Naive thymus-derived CD4-positive, alpha-beta T cell (primary cell): ENCODE measurements at regions of chr6 and their contacts with region 1.

Region 1: DNA sequence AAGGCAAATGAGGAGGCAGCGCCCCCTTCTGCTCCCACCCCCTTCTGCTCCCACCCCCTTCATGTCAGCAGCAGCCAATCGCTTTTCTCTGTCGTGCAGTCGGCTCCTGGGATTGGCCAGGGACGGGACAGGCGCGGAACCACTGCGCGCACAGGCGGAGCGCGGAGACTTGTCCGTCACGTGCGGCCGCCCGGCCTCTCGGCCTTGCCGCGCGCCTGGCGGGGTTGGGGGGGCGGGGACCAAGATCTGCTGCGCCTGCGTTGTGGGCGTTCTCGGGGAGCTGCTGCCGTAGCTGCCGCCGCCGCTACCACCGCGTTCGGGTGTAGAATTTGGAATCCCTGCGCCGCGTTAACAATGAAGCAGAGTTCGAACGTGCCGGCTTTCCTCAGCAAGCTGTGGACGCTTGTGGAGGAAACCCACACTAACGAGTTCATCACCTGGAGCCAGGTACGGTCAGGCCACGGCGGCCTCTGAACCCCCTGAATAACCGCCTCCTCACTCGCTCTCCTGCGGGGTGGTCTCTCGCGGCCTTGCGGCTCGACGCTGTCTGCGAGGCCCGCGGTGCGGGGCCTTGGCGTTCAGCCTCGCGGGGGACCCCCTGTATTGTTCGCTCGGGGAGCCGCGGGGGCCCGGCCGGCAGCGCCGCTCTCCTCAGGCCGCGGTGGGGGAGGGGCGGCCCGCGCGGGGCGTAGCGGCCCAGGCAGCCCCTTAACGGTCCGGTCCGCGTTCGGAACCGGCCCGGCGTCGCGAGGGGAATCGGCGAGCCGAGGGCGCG is at the start of gene HSF2:
- DNase-seq: peak; percentile 79 to 95 (median 91)
- ATAC-seq: peak; percentile 98
- H3K4me3 ChIP-seq: peak within 1 kb of the TSS; percentile 90
- H3K4me3 Mint-ChIP-seq: peak within 1 kb of the TSS; percentile 89 to 100 (median 99)
- H3K27ac ChIP-seq: peak within 1 kb of the TSS; percentile 87
- H3K27ac Mint-ChIP-seq: peak within 1 kb of the TSS; percentile 93 to 98 (median 97)
- H3K4me1 ChIP-seq: peaks cover 13 to 25% of the 10 kb centered on the region in 2 donors
- H3K4me1 Mint-ChIP-seq: peaks cover 29 to 54% (median 43%) of the 10 kb centered on the region in 7 donors
- H3K27me3 ChIP-seq: no peaks in the 10 kb centered on the region
- H3K27me3 Mint-ChIP-seq: no peaks in the 10 kb centered on the region
- total RNA-seq, gene HSF2: 12.5 to 32.4 (median 26.5) TPM

Region 2: GRCh38 chr6:121334299-121335086 is 1065.1 kb before region 1 on chr6 and contains the start of gene TBC1D32:
- CTCF ChIA-PET with region 1: no interaction called
- POLR2A ChIA-PET with region 1: no interaction called
- intact Hi-C with region 1: loop called (anchors 1 kb)
- DNase-seq: peak; percentile 84 to 90 (median 89)
- ATAC-seq: peak; percentile 92
- H3K4me3 ChIP-seq: peak within 1 kb of the TSS; percentile 74
- H3K4me3 Mint-ChIP-seq: peak within 1 kb of the TSS; percentile 86 to 99 (median 98)
- H3K27ac ChIP-seq: peak within 1 kb of the TSS; percentile 97
- H3K27ac Mint-ChIP-seq: peak within 1 kb of the TSS; percentile 97 to 100 (median 99)
- H3K4me1 ChIP-seq: peaks cover 4 to 8% of the 10 kb centered on the region in 2 donors
- H3K4me1 Mint-ChIP-seq: peaks cover 16 to 45% (median 35%) of the 10 kb centered on the region in 7 donors
- H3K27me3 ChIP-seq: no peaks in the 10 kb centered on the region
- H3K27me3 Mint-ChIP-seq: peaks cover 0 to 11% (median 0%) of the 10 kb centered on the region in 5 donors
- total RNA-seq, gene TBC1D32: 12.5 to 17.7 (median 15.8) TPM

Region 3: DNA sequence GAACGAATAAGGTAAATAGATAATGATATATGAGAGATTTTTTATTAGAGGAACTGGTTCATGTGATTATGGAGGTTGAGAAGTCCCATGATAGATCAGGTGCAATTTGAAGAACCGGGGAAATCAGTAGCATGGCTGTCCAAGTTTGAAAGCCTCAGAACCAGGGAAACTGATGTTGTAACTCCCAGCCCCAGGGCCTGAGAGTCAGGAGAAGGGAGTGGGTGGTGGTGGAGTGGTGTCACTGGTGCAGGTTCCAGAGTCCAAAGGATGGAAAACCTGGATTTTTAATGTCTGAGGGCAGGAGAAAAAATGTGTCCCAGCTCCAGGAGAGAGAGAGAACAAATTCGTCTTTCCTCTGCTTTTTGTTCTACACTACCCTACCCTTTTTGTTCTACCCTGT is 422.0 kb before region 1 on chr6:
- CTCF ChIA-PET with region 1: no interaction called
- POLR2A ChIA-PET with region 1: no interaction called
- intact Hi-C with region 1: no loop called
- DNase-seq: no peak
- ATAC-seq: no peak
- H3K4me3 ChIP-seq: no peak overlapping the region
- H3K4me3 Mint-ChIP-seq: no peak overlapping the region
- H3K27ac ChIP-seq: no peak overlapping the region
- H3K27ac Mint-ChIP-seq: no peak overlapping the region
- H3K4me1 ChIP-seq: no peaks in the 10 kb centered on the region
- H3K4me1 Mint-ChIP-seq: peaks cover 2 to 21% (median 12%) of the 10 kb centered on the region in 7 donors
- H3K27me3 ChIP-seq: no peaks in the 10 kb centered on the region
- H3K27me3 Mint-ChIP-seq: peaks cover 0 to 6% (median 0%) of the 10 kb centered on the region in 5 donors

Region 4: DNA sequence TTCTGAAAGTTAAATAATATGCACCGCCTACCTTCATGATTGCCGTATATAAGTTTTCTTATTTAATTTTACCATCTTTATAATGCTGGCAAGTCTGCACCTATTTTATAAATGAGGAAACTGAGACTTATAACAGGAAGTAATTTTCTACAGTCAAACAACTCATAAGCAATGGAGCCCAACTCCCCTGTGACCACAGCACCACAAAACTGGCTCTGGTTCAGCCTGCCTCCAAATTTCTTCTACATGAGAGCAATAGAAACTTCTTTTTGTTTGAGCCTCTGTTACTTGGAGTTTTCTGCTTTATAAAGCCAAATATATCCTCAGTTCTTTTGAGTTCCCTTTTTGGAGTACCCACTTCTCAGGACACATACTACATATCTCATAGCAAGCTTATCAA is 131.2 kb before region 1 on chr6:
- CTCF ChIA-PET with region 1: no interaction called
- POLR2A ChIA-PET with region 1: no interaction called
- intact Hi-C with region 1: no loop called
- DNase-seq: no peak
- ATAC-seq: no peak
- H3K4me3 ChIP-seq: no peak overlapping the region
- H3K4me3 Mint-ChIP-seq: no peak overlapping the region
- H3K27ac ChIP-seq: no peak overlapping the region
- H3K27ac Mint-ChIP-seq: no peak overlapping the region
- H3K4me1 ChIP-seq: no peaks in the 10 kb centered on the region
- H3K4me1 Mint-ChIP-seq: peaks cover 0 to 1% (median 0%) of the 10 kb centered on the region in 7 donors
- H3K27me3 ChIP-seq: no peaks in the 10 kb centered on the region
- H3K27me3 Mint-ChIP-seq: no peaks in the 10 kb centered on the region

Region 5: GRCh38 chr6:122381497-122382265 is 17.9 kb before region 1 on chr6:
- CTCF ChIA-PET with region 1: interaction called, 4 read pairs
- POLR2A ChIA-PET with region 1: interaction called, 7 read pairs
- intact Hi-C with region 1: loop called (anchors 1 kb)
- DNase-seq: peak in 8 of 9 donors; percentile 32 to 81 (median 70)
- ATAC-seq: peak; percentile 98
- H3K4me3 ChIP-seq: no peak overlapping the region
- H3K4me3 Mint-ChIP-seq: peak overlapping the region in 1 of 10 donors; percentile 7
- H3K27ac ChIP-seq: no peak overlapping the region
- H3K27ac Mint-ChIP-seq: peak overlapping the region in 2 of 9 donors; percentile 45 to 60
- H3K4me1 ChIP-seq: no peaks in the 10 kb centered on the region
- H3K4me1 Mint-ChIP-seq: peaks cover 6 to 9% (median 7%) of the 10 kb centered on the region in 7 donors
- H3K27me3 ChIP-seq: no peaks in the 10 kb centered on the region
- H3K27me3 Mint-ChIP-seq: peaks cover 0 to 31% (median 9%) of the 10 kb centered on the region in 5 donors

Region 6: DNA sequence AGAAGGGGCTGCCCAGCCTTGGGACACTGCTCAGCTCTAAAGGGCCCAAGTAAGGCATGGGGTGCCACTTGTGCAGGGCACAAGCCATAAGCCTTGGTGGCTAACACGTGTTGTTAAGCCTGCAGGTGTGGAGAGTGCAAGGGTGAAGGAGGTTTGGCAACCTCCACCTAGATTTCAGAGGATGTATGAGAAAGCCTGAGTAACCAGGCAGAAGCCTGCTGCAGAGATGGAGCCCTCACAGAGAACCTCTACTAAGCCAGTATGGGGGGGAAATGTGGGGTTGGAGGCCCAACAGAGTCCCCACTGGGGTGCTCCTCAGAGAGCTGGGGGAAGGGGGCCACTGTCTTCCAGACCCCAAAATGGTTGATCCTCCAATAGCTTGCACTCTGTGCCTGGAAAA is 39.4 kb after region 1 on chr6:
- CTCF ChIA-PET with region 1: no interaction called
- POLR2A ChIA-PET with region 1: interaction called, 5 read pairs
- intact Hi-C with region 1: loop called in 1 of 2 experiments (anchors 5 kb)
- DNase-seq: no peak
- ATAC-seq: peak; percentile 22
- H3K4me3 ChIP-seq: no peak overlapping the region
- H3K4me3 Mint-ChIP-seq: no peak overlapping the region
- H3K27ac ChIP-seq: no peak overlapping the region
- H3K27ac Mint-ChIP-seq: peak overlapping the region in 4 of 9 donors; percentile 24 to 84 (median 29)
- H3K4me1 ChIP-seq: no peaks in the 10 kb centered on the region
- H3K4me1 Mint-ChIP-seq: peaks cover 0 to 8% (median 3%) of the 10 kb centered on the region in 7 donors
- H3K27me3 ChIP-seq: no peaks in the 10 kb centered on the region
- H3K27me3 Mint-ChIP-seq: no peaks in the 10 kb centered on the region

Region 7: GRCh38 chr6:122609856-122610689 is 210.5 kb after region 1 on chr6 and contains the start of gene PKIB:
- CTCF ChIA-PET with region 1: no interaction called
- POLR2A ChIA-PET with region 1: no interaction called
- intact Hi-C with region 1: loop called in 1 of 2 experiments (anchors 10 kb)
- DNase-seq: peak; percentile 2 to 59 (median 18)
- ATAC-seq: peak; percentile 85
- H3K4me3 ChIP-seq: peak within 1 kb of the TSS; percentile 78
- H3K4me3 Mint-ChIP-seq: peak within 1 kb of the TSS; percentile 88 to 95 (median 91)
- H3K27ac ChIP-seq: no peak within 1 kb of the TSS
- H3K27ac Mint-ChIP-seq: peak within 1 kb of the TSS in 6 of 9 donors; percentile 18 to 84 (median 56)
- H3K4me1 ChIP-seq: peaks cover 6 to 7% of the 10 kb centered on the region in 2 donors
- H3K4me1 Mint-ChIP-seq: peaks cover 5 to 21% (median 16%) of the 10 kb centered on the region in 7 donors
- H3K27me3 ChIP-seq: peaks cover 0 to 12% of the 10 kb centered on the region in 2 donors
- H3K27me3 Mint-ChIP-seq: peaks cover 14 to 52% (median 46%) of the 10 kb centered on the region in 5 donors
- total RNA-seq, gene PKIB: 0.86 to 1.5 (median 0.91) TPM in 4 of 5 experiments, not detected in the other